Left lung (tissue), 14 donors: ENCODE measurements at regions of chr13 and their contacts with region 1.

Region 1: DNA sequence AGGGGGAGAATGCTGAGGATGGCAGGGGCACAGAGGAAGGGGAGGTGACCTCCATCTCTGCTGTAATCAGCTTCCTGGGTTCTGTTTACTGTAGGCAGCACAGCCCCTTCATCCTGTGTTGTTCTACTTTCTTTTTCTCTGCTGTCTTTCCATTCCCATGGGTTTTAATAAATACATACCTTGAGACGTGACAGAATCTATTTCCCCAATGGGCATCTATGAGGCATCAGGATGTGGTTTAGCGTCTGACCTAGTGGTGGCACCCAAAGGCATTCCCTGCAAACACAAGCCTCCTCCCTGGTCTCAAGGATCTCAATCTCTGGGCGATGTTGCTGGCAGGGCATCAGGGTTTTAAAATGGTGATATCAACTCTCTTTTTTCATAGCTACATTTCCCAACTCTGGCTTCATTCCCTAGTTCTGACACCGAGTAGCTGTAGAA is 60.8 kb downstream of the ALOX5AP start:
- DNase-seq: no peak
- ATAC-seq: no peak
- H3K4me3 ChIP-seq: no peak overlapping the region
- H3K27ac ChIP-seq: no peak overlapping the region
- H3K4me1 ChIP-seq: peaks cover 0 to 22% of the 10 kb centered on the region in 2 donors
- H3K27me3 ChIP-seq: no peaks in the 10 kb centered on the region
- CTCF ChIP-seq: no peak

Region 2: GRCh38 chr13:30679483-30680330 is 116.4 kb before region 1 on chr13:
- intact Hi-C with region 1: loop called in 1 of 2 experiments (anchors 5 kb)
- DNase-seq: peak in 1 of 4 donors; percentile 44
- ATAC-seq: peak; percentile 67
- H3K4me3 ChIP-seq: no peak overlapping the region
- H3K27ac ChIP-seq: no peak overlapping the region
- H3K4me1 ChIP-seq: peaks cover 0 to 21% of the 10 kb centered on the region in 2 donors
- H3K27me3 ChIP-seq: no peaks in the 10 kb centered on the region
- CTCF ChIP-seq: peak; percentile 38 to 45